ENCODE measurements at regions of chr1 and their contacts with region 1.

Region 1: DNA sequence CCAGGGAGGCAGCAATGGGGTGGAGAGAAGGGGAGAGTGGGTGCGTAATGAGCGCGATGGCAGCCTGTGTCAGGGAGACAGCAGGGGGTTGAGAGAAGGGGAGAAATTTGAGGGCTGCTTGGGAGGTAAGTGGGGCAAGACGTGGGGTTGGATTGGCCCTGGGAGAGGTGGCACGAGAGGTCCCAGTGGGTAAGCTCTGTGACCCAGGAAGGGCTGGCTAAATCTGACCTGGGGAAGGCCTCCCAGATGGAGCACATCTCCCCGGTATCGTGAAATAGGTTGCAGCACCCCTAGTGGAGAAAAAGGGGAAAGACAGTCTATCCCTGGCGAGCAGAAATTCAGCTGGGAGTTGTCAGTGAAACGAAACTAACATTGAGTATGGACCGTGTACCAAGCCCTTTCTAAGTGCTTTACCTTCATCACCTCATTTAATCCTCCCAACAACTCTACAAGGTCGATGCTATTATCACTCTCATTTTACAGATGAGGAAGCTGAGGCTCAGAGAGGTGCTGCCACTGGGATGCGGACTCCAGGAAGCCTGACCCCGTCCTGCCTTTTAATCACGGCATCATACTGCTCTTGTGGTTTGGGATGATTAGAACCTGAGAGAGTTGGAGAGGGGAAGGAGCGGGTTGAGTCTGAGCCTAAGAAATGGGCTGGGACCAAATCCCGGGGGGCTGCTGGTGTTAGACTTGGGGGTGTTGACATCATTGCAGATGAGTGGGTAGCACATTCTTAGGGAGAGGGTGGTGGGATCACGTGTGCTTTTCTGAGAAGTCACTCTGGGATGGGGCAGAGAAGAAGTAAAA is 56.6 kb upstream of the RPL11 start:
- DNase-seq: peak; percentile 66
- H3K4me3 Mint-ChIP-seq: peak overlapping the region; percentile 41
- H3K27ac Mint-ChIP-seq: peak overlapping the region; percentile 60
- H3K4me1 Mint-ChIP-seq: peaks cover 26% of the 10 kb centered on the region
- H3K27me3 Mint-ChIP-seq: peaks cover 5% of the 10 kb centered on the region

Region 2: GRCh38 chr1:23496490-23497181 is 138.4 kb before region 1 on chr1:
- intact Hi-C with region 1: loop called (anchors 5 kb)
- DNase-seq: no peak
- H3K4me3 Mint-ChIP-seq: no peak overlapping the region
- H3K27ac Mint-ChIP-seq: no peak overlapping the region
- H3K4me1 Mint-ChIP-seq: no peaks in the 10 kb centered on the region
- H3K27me3 Mint-ChIP-seq: peaks cover 4% of the 10 kb centered on the region

Region 3: GRCh38 chr1:23539698-23540266 is 95.3 kb before region 1 on chr1:
- intact Hi-C with region 1: loop called (anchors 1 kb)
- DNase-seq: peak; percentile 92
- H3K4me3 Mint-ChIP-seq: no peak overlapping the region
- H3K27ac Mint-ChIP-seq: peak overlapping the region; percentile 48
- H3K4me1 Mint-ChIP-seq: peaks cover 18% of the 10 kb centered on the region
- H3K27me3 Mint-ChIP-seq: no peaks in the 10 kb centered on the region

Region 4: DNA sequence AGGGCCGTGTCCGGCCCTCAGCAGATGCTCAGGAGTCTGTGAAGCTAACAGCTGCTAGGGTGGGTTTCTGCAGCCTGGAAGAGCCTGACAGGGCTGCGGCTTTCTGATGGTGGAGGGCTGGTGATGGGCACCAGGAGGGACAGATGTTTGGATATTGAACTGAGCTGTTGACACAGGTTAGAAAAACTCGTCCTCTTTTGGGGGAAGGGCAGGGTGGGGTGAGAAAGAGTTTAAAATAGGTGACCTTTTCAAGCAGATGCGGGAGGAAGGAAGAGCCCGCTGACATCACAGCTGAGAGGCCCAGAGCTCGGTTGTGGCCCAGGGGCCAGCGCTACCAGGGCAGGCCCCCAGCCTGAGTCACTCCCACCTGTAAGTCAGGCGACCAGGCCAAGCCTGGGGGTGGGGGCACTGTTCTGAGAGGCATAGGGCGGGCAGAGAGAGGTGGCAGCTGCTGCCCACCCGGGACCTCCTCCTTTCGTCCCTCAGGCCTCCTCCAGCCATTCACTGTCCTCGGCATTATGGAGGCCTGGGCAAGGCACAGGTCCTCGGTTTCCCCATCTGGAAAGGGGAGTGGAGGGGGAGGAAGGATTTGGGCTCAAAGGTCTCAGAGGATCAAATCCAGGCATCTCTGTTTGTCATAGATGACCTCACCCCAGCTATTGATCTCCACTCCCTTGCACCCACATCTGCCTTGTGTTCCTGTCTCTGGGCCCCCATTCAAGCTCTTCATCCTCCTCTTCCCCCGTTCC is 43.4 kb before region 1 on chr1:
- intact Hi-C with region 1: loop called (anchors 5 kb)
- DNase-seq: no peak
- H3K4me3 Mint-ChIP-seq: peak overlapping the region; percentile 51
- H3K27ac Mint-ChIP-seq: peak overlapping the region; percentile 95
- H3K4me1 Mint-ChIP-seq: peaks cover 45% of the 10 kb centered on the region
- H3K27me3 Mint-ChIP-seq: no peaks in the 10 kb centered on the region

Region 5: GRCh38 chr1:23809751-23810171 is 174.7 kb after region 1 on chr1:
- intact Hi-C with region 1: no loop called
- DNase-seq: peak; percentile 75
- H3K4me3 Mint-ChIP-seq: no peak overlapping the region
- H3K27ac Mint-ChIP-seq: no peak overlapping the region
- H3K4me1 Mint-ChIP-seq: peaks cover 3% of the 10 kb centered on the region
- H3K27me3 Mint-ChIP-seq: no peaks in the 10 kb centered on the region

Measured in activated T-helper 2 cell treated with anti-CD3 and anti-CD28 coated beads, Interferon-gamma antibody, Interleukin-2, Interleukin-4, amounts not matched to agents 10 μg/mL and 5 μg/mL and 100 μg/mL, durations not matched to agents 14 hours and 24 hours and 36 hours (primary cell).